ENCODE measurements at regions of chr19 and their contacts with region 1.

Region 1: DNA sequence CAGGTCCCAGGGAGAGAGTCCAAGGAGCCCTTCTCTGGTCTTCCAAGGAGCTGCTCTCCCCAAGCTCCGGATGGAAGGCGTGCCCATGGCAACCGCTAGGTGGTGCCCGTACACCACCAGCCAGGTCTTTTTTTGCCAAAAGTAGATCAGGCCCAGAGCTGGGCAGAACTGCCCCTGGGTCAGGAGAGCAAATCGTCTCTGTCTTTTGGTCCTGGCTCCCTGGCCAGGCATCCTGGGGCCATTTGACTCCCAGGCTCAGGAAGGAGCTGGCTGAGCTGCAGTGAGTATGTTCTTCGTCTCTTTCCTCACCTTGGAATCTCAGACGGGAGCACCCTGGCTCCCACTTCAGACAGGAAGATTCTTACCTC is 24.6 kb upstream of the BCL3 start:
- DNase-seq: peak; percentile 89
- ATAC-seq: peak; percentile 93
- H3K4me3 ChIP-seq: no peak overlapping the region
- H3K4me3 Mint-ChIP-seq: peak overlapping the region; percentile 37
- H3K27ac ChIP-seq: no peak overlapping the region
- H3K27ac Mint-ChIP-seq: peak overlapping the region; percentile 53
- H3K4me1 ChIP-seq: peaks cover 31 to 53% of the 10 kb centered on the region in 2 donors
- H3K4me1 Mint-ChIP-seq: peaks cover 44% of the 10 kb centered on the region
- H3K27me3 ChIP-seq: no peaks in the 10 kb centered on the region
- H3K27me3 Mint-ChIP-seq: no peaks in the 10 kb centered on the region
- CTCF ChIP-seq: peak; percentile 100

Region 2: DNA sequence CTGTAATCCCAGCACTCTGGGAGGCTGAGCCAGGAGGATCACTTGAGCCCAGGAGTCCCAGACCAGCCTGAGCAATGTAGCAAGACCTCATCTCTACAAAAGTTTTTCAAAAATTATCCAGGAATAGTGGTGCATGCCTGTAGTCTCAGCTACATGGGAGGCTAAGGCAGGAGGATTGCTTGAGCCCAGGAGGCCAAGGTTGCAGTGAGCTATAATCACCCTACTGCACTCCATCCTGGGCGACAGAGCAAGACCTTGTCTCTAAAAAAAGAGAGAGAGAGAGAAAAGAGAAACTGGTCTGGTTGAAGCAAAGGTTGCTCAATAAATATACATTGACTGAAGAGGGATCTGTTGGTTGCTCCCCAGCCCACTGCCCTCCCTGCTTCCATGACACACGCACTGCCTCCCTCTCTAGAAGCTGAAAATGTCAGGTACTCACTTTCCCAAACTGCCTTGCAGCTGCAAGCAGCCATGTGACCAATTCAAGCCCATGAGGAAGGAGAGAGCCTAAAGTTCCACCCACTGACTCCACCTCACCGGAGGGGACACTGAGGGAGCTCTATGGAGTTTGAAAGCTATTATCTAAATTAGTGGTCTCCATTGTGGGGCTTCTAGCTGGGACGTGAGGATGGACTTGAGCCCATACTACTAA is 10.9 kb before region 1 on chr19:
- CTCF ChIA-PET with region 1: interaction called, 31 read pairs
- POLR2A ChIA-PET with region 1: no interaction called
- intact Hi-C with region 1: no loop called
- DNase-seq: no peak
- ATAC-seq: no peak
- H3K4me3 ChIP-seq: no peak overlapping the region
- H3K4me3 Mint-ChIP-seq: no peak overlapping the region
- H3K27ac ChIP-seq: no peak overlapping the region
- H3K27ac Mint-ChIP-seq: no peak overlapping the region
- H3K4me1 ChIP-seq: no peaks in the 10 kb centered on the region
- H3K4me1 Mint-ChIP-seq: no peaks in the 10 kb centered on the region
- H3K27me3 ChIP-seq: peaks cover 0 to 11% (median 0%) of the 10 kb centered on the region in 4 experiments
- H3K27me3 Mint-ChIP-seq: peaks cover 9% of the 10 kb centered on the region
- CTCF ChIP-seq: no peak

Region 3: GRCh38 chr19:44752816-44753618 is 29.1 kb after region 1 on chr19:
- CTCF ChIA-PET with region 1: interaction called, 84 read pairs
- POLR2A ChIA-PET with region 1: interaction called, 18 read pairs
- intact Hi-C with region 1: loop called (anchors 1 kb)
- DNase-seq: peak; percentile 97
- ATAC-seq: peak; percentile 69
- H3K4me3 ChIP-seq: peak overlapping the region; percentile 44 to 94 (median 69)
- H3K4me3 Mint-ChIP-seq: peak overlapping the region; percentile 97
- H3K27ac ChIP-seq: peak overlapping the region; percentile 92
- H3K27ac Mint-ChIP-seq: peak overlapping the region; percentile 98
- H3K4me1 ChIP-seq: peaks cover 55 to 69% of the 10 kb centered on the region in 2 donors
- H3K4me1 Mint-ChIP-seq: peaks cover 59% of the 10 kb centered on the region
- H3K27me3 ChIP-seq: no peaks in the 10 kb centered on the region
- H3K27me3 Mint-ChIP-seq: no peaks in the 10 kb centered on the region
- CTCF ChIP-seq: no peak

Region 4: DNA sequence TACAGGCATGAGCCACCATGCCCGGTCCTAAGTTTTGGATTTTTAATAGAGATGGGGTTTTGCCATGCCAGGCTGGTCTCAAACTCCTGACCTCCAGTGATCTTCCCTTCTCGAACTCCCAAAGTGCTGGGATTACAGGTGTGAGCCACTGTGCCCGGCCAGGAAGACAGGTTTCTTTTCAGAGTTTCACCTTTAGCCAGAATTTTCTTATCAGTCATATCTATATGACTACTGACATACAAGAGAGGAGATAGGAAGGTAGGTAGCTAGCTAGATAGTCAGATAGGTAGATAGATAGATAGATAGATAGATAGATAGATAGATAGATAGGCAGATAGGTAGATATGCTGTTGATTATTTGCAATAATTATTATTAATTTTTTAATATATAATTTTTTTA is 61.3 kb after region 1 on chr19:
- CTCF ChIA-PET with region 1: interaction called, 26 read pairs
- POLR2A ChIA-PET with region 1: no interaction called
- intact Hi-C with region 1: no loop called
- DNase-seq: no peak
- ATAC-seq: no peak
- H3K4me3 ChIP-seq: no peak overlapping the region
- H3K4me3 Mint-ChIP-seq: no peak overlapping the region
- H3K27ac ChIP-seq: no peak overlapping the region
- H3K27ac Mint-ChIP-seq: no peak overlapping the region
- H3K4me1 ChIP-seq: peaks cover 0 to 6% of the 10 kb centered on the region in 2 donors
- H3K4me1 Mint-ChIP-seq: peaks cover 5% of the 10 kb centered on the region
- H3K27me3 ChIP-seq: no peaks in the 10 kb centered on the region
- H3K27me3 Mint-ChIP-seq: peaks cover 16% of the 10 kb centered on the region
- CTCF ChIP-seq: no peak

Region 5: GRCh38 chr19:44845612-44846454 is 121.9 kb after region 1 on chr19 and contains the start of gene NECTIN2:
- CTCF ChIA-PET with region 1: interaction called, 7 read pairs
- POLR2A ChIA-PET with region 1: no interaction called
- intact Hi-C with region 1: loop called (anchors 10 kb)
- DNase-seq: peak; percentile 79
- ATAC-seq: peak; percentile 64
- H3K4me3 ChIP-seq: peak within 1 kb of the TSS; percentile 19 to 64 (median 47)
- H3K4me3 Mint-ChIP-seq: peak within 1 kb of the TSS; percentile 83
- H3K27ac ChIP-seq: no peak within 1 kb of the TSS
- H3K27ac Mint-ChIP-seq: peak within 1 kb of the TSS; percentile 20
- H3K4me1 ChIP-seq: peaks cover 35% of the 10 kb centered on the region in 2 donors
- H3K4me1 Mint-ChIP-seq: peaks cover 22% of the 10 kb centered on the region
- H3K27me3 ChIP-seq: peaks cover 0 to 44% (median 19%) of the 10 kb centered on the region in 4 experiments
- H3K27me3 Mint-ChIP-seq: peaks cover 38% of the 10 kb centered on the region
- CTCF ChIP-seq: no peak
- total RNA-seq, gene NECTIN2: 0.32 TPM in 1 of 2 replicates, not detected in the other